ENCODE measurements at regions of chr16 and their contacts with region 1.

Region 1: DNA sequence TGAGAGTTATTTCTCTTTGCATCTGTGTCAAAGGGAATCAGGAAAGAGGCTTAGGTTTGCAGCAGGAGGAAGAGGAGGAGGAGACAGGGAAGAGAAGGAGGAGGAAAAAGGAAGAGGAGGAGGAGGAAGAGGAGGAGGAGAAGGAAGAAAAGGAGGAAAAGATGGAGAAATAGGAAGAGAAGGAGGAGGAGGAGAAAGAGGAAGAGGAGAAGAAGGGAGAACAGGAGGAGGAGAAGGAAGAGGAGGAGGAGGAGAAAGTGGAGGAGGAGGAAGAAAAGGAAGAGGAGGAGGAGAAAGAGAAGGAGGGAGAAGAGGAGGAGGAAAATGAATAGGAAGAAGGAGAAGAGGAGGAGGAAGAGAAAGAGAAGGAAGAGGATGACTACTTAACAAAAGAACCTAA is 459.1 kb downstream of the GRIN2A start:
- DNase-seq: no peak
- H3K4me3 ChIP-seq: no peak overlapping the region
- H3K27ac ChIP-seq: no peak overlapping the region
- H3K4me1 ChIP-seq: no peaks in the 10 kb centered on the region
- H3K27me3 ChIP-seq: no peaks in the 10 kb centered on the region
- CTCF ChIP-seq: no peak

Region 2: GRCh38 chr16:9061358-9061813 is 661.8 kb before region 1 on chr16:
- intact Hi-C with region 1: no loop called
- DNase-seq: no peak
- H3K4me3 ChIP-seq: no peak overlapping the region
- H3K27ac ChIP-seq: no peak overlapping the region
- H3K4me1 ChIP-seq: no peaks in the 10 kb centered on the region
- H3K27me3 ChIP-seq: no peaks in the 10 kb centered on the region
- CTCF ChIP-seq: no peak

Region 3: GRCh38 chr16:9612267-9612666 is 110.9 kb before region 1 on chr16:
- intact Hi-C with region 1: no loop called
- DNase-seq: no peak
- H3K4me3 ChIP-seq: no peak overlapping the region
- H3K27ac ChIP-seq: no peak overlapping the region
- H3K4me1 ChIP-seq: no peaks in the 10 kb centered on the region
- H3K27me3 ChIP-seq: no peaks in the 10 kb centered on the region
- CTCF ChIP-seq: no peak

Region 4: GRCh38 chr16:9787717-9788116 is 64.6 kb after region 1 on chr16:
- intact Hi-C with region 1: loop called (anchors 10 kb)
- DNase-seq: no peak
- H3K4me3 ChIP-seq: no peak overlapping the region
- H3K27ac ChIP-seq: no peak overlapping the region
- H3K4me1 ChIP-seq: no peaks in the 10 kb centered on the region
- H3K27me3 ChIP-seq: no peaks in the 10 kb centered on the region
- CTCF ChIP-seq: no peak